CD8-positive, alpha-beta T cell (primary cell): ENCODE measurements at regions of chr10 and their contacts with region 1.

Region 1: GRCh38 chr10:61903221-61903927 is 1.9 kb downstream of the ARID5B start:
- DNase-seq: peak; percentile 39 to 83 (median 67)
- ATAC-seq: peak; percentile 41
- H3K4me3 ChIP-seq: peak overlapping the region; percentile 91 to 93
- H3K4me3 Mint-ChIP-seq: peak overlapping the region; percentile 84
- H3K27ac ChIP-seq: peak overlapping the region; percentile 94 to 95
- H3K27ac Mint-ChIP-seq: peak overlapping the region; percentile 97
- H3K4me1 ChIP-seq: peaks cover 24% of the 10 kb centered on the region
- H3K4me1 Mint-ChIP-seq: peaks cover 44% of the 10 kb centered on the region
- H3K27me3 ChIP-seq: no peaks in the 10 kb centered on the region
- H3K27me3 Mint-ChIP-seq: no peaks in the 10 kb centered on the region
- CTCF ChIP-seq: peak; percentile 22

Region 2: GRCh38 chr10:59906417-59907202 is 1996.8 kb before region 1 on chr10 and contains the start of gene CCDC6:
- CTCF ChIA-PET with region 1: no interaction called
- POLR2A ChIA-PET with region 1: no interaction called
- intact Hi-C with region 1: loop called in 1 of 2 experiments (anchors 5 kb)
- DNase-seq: peak; percentile 87 to 96 (median 94)
- ATAC-seq: peak; percentile 89
- H3K4me3 ChIP-seq: peak within 1 kb of the TSS; percentile 80 to 84
- H3K4me3 Mint-ChIP-seq: peak within 1 kb of the TSS; percentile 95
- H3K27ac ChIP-seq: peak within 1 kb of the TSS; percentile 77 to 80
- H3K27ac Mint-ChIP-seq: peak within 1 kb of the TSS; percentile 97
- H3K4me1 ChIP-seq: peaks cover 41% of the 10 kb centered on the region
- H3K4me1 Mint-ChIP-seq: peaks cover 62% of the 10 kb centered on the region
- H3K27me3 ChIP-seq: no peaks in the 10 kb centered on the region
- H3K27me3 Mint-ChIP-seq: no peaks in the 10 kb centered on the region
- CTCF ChIP-seq: peak; percentile 80
- total RNA-seq, gene CCDC6: 21.6 to 23.7 TPM

Region 3: DNA sequence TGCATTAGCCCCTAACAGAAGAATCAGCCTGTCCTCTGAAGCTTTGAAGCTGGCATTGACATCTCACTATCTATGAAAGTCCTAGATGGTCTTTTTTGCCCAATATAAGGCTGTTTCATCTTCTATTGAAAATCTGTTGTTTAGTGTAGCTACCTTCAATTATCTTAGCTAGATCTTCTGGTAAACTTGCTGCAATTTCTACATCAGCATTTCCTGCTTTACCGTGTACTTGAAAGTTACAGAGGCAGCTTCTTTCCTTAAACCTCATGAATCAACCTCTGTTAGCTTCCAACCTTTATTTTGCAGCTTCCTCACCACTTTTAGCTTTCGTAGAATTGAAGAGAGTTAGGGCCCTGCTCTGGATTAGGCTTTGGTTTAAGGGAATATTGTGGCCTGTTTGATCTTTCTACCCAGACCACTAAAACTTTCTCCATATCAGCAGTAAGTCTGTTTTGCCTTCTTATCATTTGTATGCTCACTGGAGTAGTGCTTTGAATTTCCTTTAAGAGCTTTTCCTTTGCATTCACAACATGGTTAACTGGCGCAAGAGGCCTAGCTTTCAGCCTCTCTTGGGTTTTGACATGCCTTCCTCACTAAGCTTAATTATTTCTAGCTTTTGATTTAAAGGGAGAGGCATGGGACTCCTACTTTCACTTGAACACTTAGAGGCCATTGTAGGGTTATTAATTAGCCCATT is 30.6 kb after region 1 on chr10:
- CTCF ChIA-PET with region 1: interaction called, 13 read pairs
- POLR2A ChIA-PET with region 1: interaction called, 8 read pairs
- intact Hi-C with region 1: no loop called
- DNase-seq: peak in 1 of 9 experiments; percentile 18
- ATAC-seq: peak; percentile 34
- H3K4me3 ChIP-seq: no peak overlapping the region
- H3K4me3 Mint-ChIP-seq: no peak overlapping the region
- H3K27ac ChIP-seq: peak overlapping the region in 1 of 2 experiments; percentile 57
- H3K27ac Mint-ChIP-seq: peak overlapping the region; percentile 87
- H3K4me1 ChIP-seq: peaks cover 11% of the 10 kb centered on the region
- H3K4me1 Mint-ChIP-seq: peaks cover 57% of the 10 kb centered on the region
- H3K27me3 ChIP-seq: no peaks in the 10 kb centered on the region
- H3K27me3 Mint-ChIP-seq: no peaks in the 10 kb centered on the region
- CTCF ChIP-seq: no peak

Region 4: DNA sequence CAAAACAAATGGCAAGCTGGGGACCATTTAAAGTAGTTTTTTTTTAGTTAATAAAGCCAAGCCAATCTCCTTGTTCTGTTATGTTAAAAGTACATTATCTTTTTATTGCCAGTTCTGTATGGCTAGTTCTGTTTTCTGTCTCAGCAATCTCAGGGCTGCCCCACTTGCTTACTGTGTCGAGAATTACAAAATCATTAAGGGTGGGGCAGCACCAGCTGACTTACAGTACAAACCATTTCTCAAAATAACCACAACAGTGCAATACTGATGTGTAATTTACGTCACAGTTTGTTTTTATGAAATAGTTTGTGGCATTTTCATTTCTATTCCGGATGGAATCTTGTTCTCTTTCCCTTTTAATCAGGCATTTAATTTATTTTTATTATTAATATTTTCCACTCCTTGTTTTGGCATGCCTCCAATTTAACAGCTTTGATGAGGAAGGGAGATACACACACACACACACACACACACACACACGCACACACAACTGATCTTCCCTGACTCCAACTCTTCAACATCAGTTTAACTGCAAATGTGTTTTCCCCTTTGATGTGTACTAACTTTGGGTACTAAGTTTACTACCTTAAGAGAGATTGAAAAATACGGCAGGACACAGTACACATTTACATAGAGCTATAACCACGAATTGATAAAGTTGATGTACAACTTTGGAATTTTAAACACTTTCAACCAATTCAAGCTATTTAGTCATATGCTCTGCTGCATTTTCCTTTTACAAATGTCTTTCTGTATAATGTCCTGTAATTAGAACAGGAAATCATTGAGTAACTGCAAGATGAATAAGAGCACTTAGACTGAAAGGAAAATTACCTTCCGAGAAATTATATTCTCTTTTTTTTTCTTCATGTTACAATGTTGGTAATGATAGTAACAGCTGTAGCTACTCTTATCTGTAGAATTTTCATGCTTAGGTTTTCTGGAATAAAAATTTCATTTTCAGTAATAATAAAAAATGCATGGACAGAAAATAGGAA is 89.6 kb after region 1 on chr10:
- CTCF ChIA-PET with region 1: interaction called, 6 read pairs
- POLR2A ChIA-PET with region 1: interaction called, 6 read pairs
- intact Hi-C with region 1: loop called (anchors 2 kb)
- DNase-seq: peak in 8 of 9 experiments; percentile 15 to 88 (median 47)
- ATAC-seq: peak; percentile 83
- H3K4me3 ChIP-seq: peak overlapping the region in 1 of 2 experiments; percentile 27
- H3K4me3 Mint-ChIP-seq: peak overlapping the region; percentile 64
- H3K27ac ChIP-seq: peak overlapping the region; percentile 20 to 85
- H3K27ac Mint-ChIP-seq: peak overlapping the region; percentile 90
- H3K4me1 ChIP-seq: peaks cover 16% of the 10 kb centered on the region
- H3K4me1 Mint-ChIP-seq: peaks cover 48% of the 10 kb centered on the region
- H3K27me3 ChIP-seq: no peaks in the 10 kb centered on the region
- H3K27me3 Mint-ChIP-seq: no peaks in the 10 kb centered on the region
- CTCF ChIP-seq: no peak

Region 5: DNA sequence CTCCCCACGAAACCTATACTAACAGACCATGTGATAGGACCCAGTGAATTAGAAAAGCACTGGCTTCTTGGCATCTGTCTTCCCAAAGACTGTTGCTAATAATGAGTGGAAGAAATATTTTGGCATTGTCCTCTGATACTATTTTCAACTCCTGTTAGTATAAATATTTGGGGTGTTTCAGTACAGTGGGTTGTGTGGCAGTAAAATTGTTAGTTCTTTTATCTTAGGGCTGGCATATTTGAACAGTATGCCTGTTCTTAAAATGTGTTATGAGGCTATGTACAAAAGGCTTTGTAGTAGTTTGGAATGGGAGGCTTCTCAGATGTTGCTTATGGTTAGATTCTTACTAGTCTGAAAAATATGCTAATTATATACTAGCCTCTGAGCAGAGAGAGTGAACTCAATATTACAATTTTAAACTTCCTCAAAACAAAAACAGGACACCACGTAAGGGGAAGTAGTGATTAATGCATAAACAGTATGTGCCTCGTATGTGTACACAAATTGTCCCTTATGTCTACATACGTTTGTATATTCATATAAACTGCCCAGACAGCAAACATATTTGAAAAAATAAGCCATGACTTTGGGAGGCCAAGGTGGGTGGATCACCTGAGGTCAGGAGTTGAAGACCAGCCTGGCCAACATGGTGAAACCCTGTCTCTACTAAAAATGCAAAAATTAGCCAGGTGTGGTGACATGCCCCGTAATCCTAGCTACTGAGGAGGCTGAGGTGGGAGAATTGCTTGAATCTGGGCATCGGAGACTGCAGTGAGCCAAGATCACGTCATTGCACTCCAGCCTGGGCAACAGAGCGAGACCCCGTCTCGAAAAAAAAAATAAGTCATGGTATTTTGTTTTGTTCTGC is 113.5 kb after region 1 on chr10:
- CTCF ChIA-PET with region 1: no interaction called
- POLR2A ChIA-PET with region 1: no interaction called
- intact Hi-C with region 1: no loop called
- DNase-seq: peak in 1 of 9 experiments; percentile 22
- ATAC-seq: peak; percentile 51
- H3K4me3 ChIP-seq: no peak overlapping the region
- H3K4me3 Mint-ChIP-seq: no peak overlapping the region
- H3K27ac ChIP-seq: no peak overlapping the region
- H3K27ac Mint-ChIP-seq: peak overlapping the region; percentile 63
- H3K4me1 ChIP-seq: no peaks in the 10 kb centered on the region
- H3K4me1 Mint-ChIP-seq: peaks cover 24% of the 10 kb centered on the region
- H3K27me3 ChIP-seq: no peaks in the 10 kb centered on the region
- H3K27me3 Mint-ChIP-seq: no peaks in the 10 kb centered on the region
- CTCF ChIP-seq: no peak

Region 6: GRCh38 chr10:62183442-62183841 is 280.1 kb after region 1 on chr10:
- CTCF ChIA-PET with region 1: interaction called, 6 read pairs
- POLR2A ChIA-PET with region 1: interaction called, 11 read pairs
- intact Hi-C with region 1: loop called (anchors 2 to 5 kb)
- DNase-seq: peak in 7 of 9 experiments; percentile 20 to 89 (median 51)
- ATAC-seq: peak; percentile 87
- H3K4me3 ChIP-seq: no peak overlapping the region
- H3K4me3 Mint-ChIP-seq: peak overlapping the region; percentile 30
- H3K27ac ChIP-seq: peak overlapping the region; percentile 6 to 41
- H3K27ac Mint-ChIP-seq: peak overlapping the region; percentile 83
- H3K4me1 ChIP-seq: peaks cover 58% of the 10 kb centered on the region
- H3K4me1 Mint-ChIP-seq: peaks cover 75% of the 10 kb centered on the region
- H3K27me3 ChIP-seq: no peaks in the 10 kb centered on the region
- H3K27me3 Mint-ChIP-seq: no peaks in the 10 kb centered on the region
- CTCF ChIP-seq: no peak

Region 7: DNA sequence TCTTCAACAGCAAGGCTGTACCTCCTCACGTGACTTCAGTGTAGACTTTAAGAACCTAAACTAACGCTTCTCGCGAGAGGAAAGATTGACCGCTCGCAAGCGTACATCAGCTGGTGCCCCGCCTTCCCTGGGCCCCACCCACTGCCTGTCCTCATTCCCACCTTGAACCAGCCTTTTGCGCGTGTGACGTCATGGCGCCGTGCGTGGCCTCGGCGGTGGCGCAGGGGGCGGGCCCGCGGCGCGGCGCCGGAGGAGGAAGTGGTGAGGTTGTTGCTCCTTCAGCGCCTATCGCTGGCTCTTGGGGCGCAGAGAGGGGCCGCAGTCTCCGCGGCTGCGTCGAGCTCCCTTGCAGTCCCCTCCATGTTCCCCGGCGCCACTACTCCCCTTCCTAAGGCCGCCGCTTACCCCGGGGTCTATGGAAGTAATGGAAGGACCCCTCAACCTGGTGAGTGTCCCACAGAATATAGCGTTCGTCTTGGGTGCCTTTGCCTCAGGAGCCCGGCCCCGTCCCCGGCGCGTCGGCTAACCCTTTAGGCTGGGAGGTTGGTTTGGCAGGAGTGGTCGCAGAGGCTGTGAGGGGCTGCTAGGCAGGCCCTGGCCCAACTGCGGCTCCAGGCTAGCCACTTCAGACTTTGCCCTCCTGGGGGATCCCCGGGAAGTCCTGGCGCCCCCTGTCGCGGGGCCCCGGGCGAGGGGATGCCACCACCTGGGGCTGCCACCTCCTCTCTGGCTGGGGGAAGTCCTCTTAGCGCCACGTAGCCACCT is 1229.9 kb after region 1 on chr10 and contains the start of gene NRBF2:
- CTCF ChIA-PET with region 1: no interaction called
- POLR2A ChIA-PET with region 1: interaction called, 3 read pairs
- intact Hi-C with region 1: loop called in 1 of 2 experiments (anchors 2 kb)
- DNase-seq: peak; percentile 94 to 99 (median 97)
- ATAC-seq: peak; percentile 91
- H3K4me3 ChIP-seq: peak within 1 kb of the TSS; percentile 96 to 97
- H3K4me3 Mint-ChIP-seq: peak within 1 kb of the TSS; percentile 91
- H3K27ac ChIP-seq: peak within 1 kb of the TSS; percentile 96 to 98
- H3K27ac Mint-ChIP-seq: peak within 1 kb of the TSS; percentile 97
- H3K4me1 ChIP-seq: peaks cover 41% of the 10 kb centered on the region
- H3K4me1 Mint-ChIP-seq: peaks cover 37% of the 10 kb centered on the region
- H3K27me3 ChIP-seq: no peaks in the 10 kb centered on the region
- H3K27me3 Mint-ChIP-seq: peaks cover 5% of the 10 kb centered on the region
- CTCF ChIP-seq: peak; percentile 22
- total RNA-seq, gene NRBF2: 26.6 to 29.1 TPM